Esophagus muscularis mucosa (tissue), 4 donors: ENCODE measurements at regions of chr2 and their contacts with region 1.

Region 1: DNA sequence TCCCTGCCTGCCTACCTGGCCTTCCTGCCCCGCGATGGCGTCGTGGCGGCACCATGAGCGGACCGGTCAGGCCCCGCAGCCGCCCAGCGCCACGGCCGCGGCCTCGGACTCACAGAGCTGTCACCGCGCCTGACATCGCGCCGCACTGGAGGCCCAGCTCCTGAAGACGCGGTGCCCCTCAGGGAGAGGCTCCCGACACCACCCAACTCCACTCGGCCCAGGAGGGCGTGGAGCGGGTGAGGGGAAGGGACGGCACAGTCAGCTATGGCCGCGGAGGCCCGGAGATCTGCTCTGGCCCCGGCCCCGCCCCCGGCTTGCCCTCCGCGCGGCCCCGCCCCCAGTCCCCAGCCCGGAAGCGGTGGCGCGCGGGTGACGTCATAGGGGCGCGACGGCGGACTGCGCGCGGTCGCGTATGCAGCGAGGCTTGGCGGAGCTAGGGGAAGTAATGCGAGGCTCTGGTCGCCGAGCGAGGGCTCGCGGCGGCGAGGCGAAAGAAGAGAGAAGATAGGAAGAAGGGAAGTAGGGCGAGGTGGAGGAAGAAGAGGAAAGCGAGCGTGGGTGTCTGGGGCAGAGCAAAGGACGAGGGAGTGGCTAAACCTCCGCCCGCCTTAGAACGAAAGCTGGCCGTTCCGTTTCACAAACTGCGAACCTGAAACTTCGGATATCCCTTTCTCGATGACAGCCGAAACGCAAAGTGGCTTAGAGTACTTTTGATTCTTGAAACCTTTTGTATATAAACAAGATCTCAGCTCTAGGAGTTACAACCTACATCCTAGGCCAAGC is at the start of gene SLC35F5:
- DNase-seq: peak; percentile 98
- H3K4me3 ChIP-seq: peak within 1 kb of the TSS; percentile 80 to 98 (median 92)
- H3K27ac ChIP-seq: peak within 1 kb of the TSS; percentile 92 to 96 (median 93)
- H3K4me1 ChIP-seq: peaks cover 17 to 37% (median 27%) of the 10 kb centered on the region in 4 donors
- H3K27me3 ChIP-seq: peaks cover 0 to 2% (median 0%) of the 10 kb centered on the region in 4 donors
- CTCF ChIP-seq: no peak
- EP300 ChIP-seq: no peak
- POLR2A ChIP-seq: peak; percentile 81
- total RNA-seq, gene SLC35F5: 40.9 to 53.2 (median 48.0) TPM

Region 2: GRCh38 chr2:113675875-113676274 is 80.7 kb before region 1 on chr2:
- intact Hi-C with region 1: no loop called
- DNase-seq: no peak
- H3K4me3 ChIP-seq: no peak overlapping the region
- H3K27ac ChIP-seq: no peak overlapping the region
- H3K4me1 ChIP-seq: peaks cover 0 to 13% (median 0%) of the 10 kb centered on the region in 4 donors
- H3K27me3 ChIP-seq: no peaks in the 10 kb centered on the region
- CTCF ChIP-seq: no peak
- EP300 ChIP-seq: no peak
- POLR2A ChIP-seq: no peak

Region 3: DNA sequence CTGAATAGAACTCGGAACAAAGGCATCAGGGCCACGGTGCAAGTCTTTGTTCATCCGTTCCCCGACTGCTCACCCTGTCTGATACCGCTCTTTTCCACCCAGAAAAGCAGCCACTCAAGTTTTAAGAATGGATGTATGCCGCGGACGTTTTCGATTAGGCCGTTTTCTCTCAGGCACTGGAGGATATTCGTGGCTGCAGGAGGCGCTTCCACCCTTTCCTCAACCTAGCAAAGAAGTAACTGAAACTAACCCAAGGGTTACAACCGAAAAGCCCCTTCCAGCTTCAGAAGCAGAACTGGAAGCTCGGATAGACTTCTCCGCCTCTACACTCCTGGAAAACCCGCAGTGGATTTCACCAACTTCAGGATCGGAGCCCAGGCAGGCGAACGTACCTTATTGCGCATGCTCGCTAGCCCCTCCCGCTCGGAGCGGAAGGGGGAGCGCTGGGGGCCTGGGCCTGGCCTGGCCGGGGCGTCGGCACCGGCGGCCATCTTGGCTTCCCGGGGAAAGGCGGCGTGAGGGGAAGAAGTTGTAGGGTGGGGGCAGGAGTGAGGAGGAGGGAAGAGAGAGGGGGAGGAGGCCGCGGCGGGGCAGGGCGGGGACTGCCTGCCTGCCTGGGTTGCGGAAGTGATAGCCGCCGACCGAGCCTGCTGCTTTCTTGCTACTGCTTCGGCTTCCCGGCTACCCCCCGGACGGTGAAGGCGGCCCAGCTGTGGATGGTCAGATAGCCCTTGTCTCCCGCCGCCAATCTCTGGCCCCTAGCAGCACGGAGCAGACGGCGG is 133.1 kb after region 1 on chr2 and contains the start of gene ACTR3:
- intact Hi-C with region 1: loop called (anchors 5 kb)
- DNase-seq: peak; percentile 99
- H3K4me3 ChIP-seq: peak within 1 kb of the TSS; percentile 76 to 98 (median 90)
- H3K27ac ChIP-seq: peak within 1 kb of the TSS; percentile 96 to 99 (median 99)
- H3K4me1 ChIP-seq: peaks cover 50 to 66% (median 61%) of the 10 kb centered on the region in 4 donors
- H3K27me3 ChIP-seq: no peaks in the 10 kb centered on the region
- CTCF ChIP-seq: peak in 2 of 3 experiments; percentile 9
- EP300 ChIP-seq: no peak
- POLR2A ChIP-seq: peak; percentile 58
- total RNA-seq, gene ACTR3: 163 to 198 (median 188) TPM

Region 4: GRCh38 chr2:113930448-113930847 is 173.9 kb after region 1 on chr2:
- intact Hi-C with region 1: loop called (anchors 10 kb)
- DNase-seq: no peak
- H3K4me3 ChIP-seq: no peak overlapping the region
- H3K27ac ChIP-seq: no peak overlapping the region
- H3K4me1 ChIP-seq: peaks cover 0 to 4% (median 0%) of the 10 kb centered on the region in 4 donors
- H3K27me3 ChIP-seq: no peaks in the 10 kb centered on the region
- CTCF ChIP-seq: no peak
- EP300 ChIP-seq: no peak
- POLR2A ChIP-seq: no peak